Activated B cell treated with CpG ODN at 0.5 μM for 24 hours (primary cell): ENCODE measurements at regions of chr1 and their contacts with region 1.

Region 1: GRCh38 chr1:161045750-161046571 is at the start of gene USF1:
- DNase-seq: peak; percentile 91
- ATAC-seq: peak; percentile 62
- H3K4me3 Mint-ChIP-seq: peak within 1 kb of the TSS; percentile 95
- H3K27ac Mint-ChIP-seq: peak within 1 kb of the TSS; percentile 100
- H3K4me1 Mint-ChIP-seq: peaks cover 66% of the 10 kb centered on the region
- H3K27me3 Mint-ChIP-seq: no peaks in the 10 kb centered on the region
- CTCF ChIP-seq: no peak
- total RNA-seq, gene USF1: 134 and 143 TPM in 2 replicates

Region 2: DNA sequence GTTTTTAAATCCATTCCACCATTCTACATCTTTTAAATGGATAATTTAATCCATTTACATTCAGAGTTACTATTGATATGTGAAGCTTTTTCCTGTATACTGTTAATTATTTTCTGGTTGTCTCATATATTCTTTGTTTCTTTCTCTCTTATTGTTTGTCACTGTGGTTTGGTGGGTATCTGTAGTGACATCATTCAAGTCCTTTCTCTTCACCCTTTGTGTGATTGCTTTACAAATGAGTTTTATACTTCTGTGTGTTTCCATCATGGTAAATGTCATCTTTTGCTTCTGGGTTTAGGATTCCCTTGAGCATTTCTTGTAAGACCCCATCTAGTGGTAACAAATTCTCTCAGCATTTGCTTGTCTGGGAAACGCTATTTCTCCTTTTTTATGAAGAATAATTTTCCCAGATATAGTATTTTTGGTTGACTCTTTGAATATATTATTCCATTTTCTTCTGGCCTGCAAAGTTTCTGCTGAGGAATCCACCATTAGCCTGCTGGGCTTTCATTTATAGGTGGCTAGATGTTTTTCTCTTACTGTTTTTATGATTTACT is 239.8 kb before region 1 on chr1:
- CTCF ChIA-PET with region 1: no interaction called
- POLR2A ChIA-PET with region 1: no interaction called
- intact Hi-C with region 1: no loop called
- DNase-seq: no peak
- ATAC-seq: no peak
- H3K4me3 Mint-ChIP-seq: no peak overlapping the region
- H3K27ac Mint-ChIP-seq: no peak overlapping the region
- H3K4me1 Mint-ChIP-seq: peaks cover 66% of the 10 kb centered on the region
- H3K27me3 Mint-ChIP-seq: no peaks in the 10 kb centered on the region
- CTCF ChIP-seq: no peak

Region 3: GRCh38 chr1:160997323-160998038 is 48.5 kb before region 1 on chr1:
- CTCF ChIA-PET with region 1: interaction called, 10 read pairs
- POLR2A ChIA-PET with region 1: interaction called, 13 read pairs
- intact Hi-C with region 1: loop called (anchors 1 kb)
- DNase-seq: peak; percentile 29
- ATAC-seq: peak; percentile 81
- H3K4me3 Mint-ChIP-seq: no peak overlapping the region
- H3K27ac Mint-ChIP-seq: peak overlapping the region; percentile 42
- H3K4me1 Mint-ChIP-seq: peaks cover 3% of the 10 kb centered on the region
- H3K27me3 Mint-ChIP-seq: no peaks in the 10 kb centered on the region
- CTCF ChIP-seq: no peak

Region 4: GRCh38 chr1:161021165-161021960 is 24.6 kb before region 1 on chr1:
- CTCF ChIA-PET with region 1: interaction called, 3 read pairs
- POLR2A ChIA-PET with region 1: interaction called, 63 read pairs
- intact Hi-C with region 1: loop called (anchors 1 kb)
- DNase-seq: peak; percentile 74
- ATAC-seq: peak; percentile 92
- H3K4me3 Mint-ChIP-seq: peak overlapping the region; percentile 95
- H3K27ac Mint-ChIP-seq: peak overlapping the region; percentile 91
- H3K4me1 Mint-ChIP-seq: peaks cover 27% of the 10 kb centered on the region
- H3K27me3 Mint-ChIP-seq: no peaks in the 10 kb centered on the region
- CTCF ChIP-seq: no peak

Region 5: GRCh38 chr1:161117759-161118581 is 72.0 kb after region 1 on chr1 and contains the starts of genes NIT1 and PFDN2:
- CTCF ChIA-PET with region 1: no interaction called
- POLR2A ChIA-PET with region 1: interaction called, 25 read pairs
- intact Hi-C with region 1: loop called (anchors 2 kb)
- DNase-seq: peak; percentile 84
- ATAC-seq: peak; percentile 77
- H3K4me3 Mint-ChIP-seq: peak within 1 kb of the TSS; percentile 92
- H3K27ac Mint-ChIP-seq: peak within 1 kb of the TSS; percentile 89
- H3K4me1 Mint-ChIP-seq: peaks cover 87% of the 10 kb centered on the region
- H3K27me3 Mint-ChIP-seq: no peaks in the 10 kb centered on the region
- CTCF ChIP-seq: no peak
- total RNA-seq, gene NIT1: 40.5 and 43.9 TPM in 2 replicates
- total RNA-seq, gene PFDN2: 43.8 and 67.9 TPM in 2 replicates

Region 6: DNA sequence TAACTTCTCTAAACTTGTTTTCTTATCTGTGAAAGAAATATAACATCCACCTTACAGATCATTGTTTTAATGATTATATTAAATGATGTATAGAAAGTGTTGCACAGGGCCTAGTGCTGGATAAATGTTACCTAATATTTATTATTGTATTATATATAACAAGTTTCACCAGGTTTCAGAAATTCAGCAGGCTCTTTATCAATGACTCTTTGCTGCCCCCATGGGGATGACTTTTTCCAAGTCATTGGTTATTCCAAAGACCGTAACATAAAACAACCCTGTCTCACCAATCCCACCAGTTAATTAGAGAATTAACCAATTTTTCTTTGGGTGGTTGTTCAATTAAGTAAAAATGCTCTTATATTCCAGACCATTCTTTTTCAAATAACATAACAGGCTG is 93.8 kb after region 1 on chr1:
- CTCF ChIA-PET with region 1: interaction called, 9 read pairs
- POLR2A ChIA-PET with region 1: interaction called, 11 read pairs
- intact Hi-C with region 1: no loop called
- DNase-seq: no peak
- ATAC-seq: peak; percentile 50
- H3K4me3 Mint-ChIP-seq: no peak overlapping the region
- H3K27ac Mint-ChIP-seq: no peak overlapping the region
- H3K4me1 Mint-ChIP-seq: peaks cover 4% of the 10 kb centered on the region
- H3K27me3 Mint-ChIP-seq: no peaks in the 10 kb centered on the region
- CTCF ChIP-seq: no peak

Region 7: DNA sequence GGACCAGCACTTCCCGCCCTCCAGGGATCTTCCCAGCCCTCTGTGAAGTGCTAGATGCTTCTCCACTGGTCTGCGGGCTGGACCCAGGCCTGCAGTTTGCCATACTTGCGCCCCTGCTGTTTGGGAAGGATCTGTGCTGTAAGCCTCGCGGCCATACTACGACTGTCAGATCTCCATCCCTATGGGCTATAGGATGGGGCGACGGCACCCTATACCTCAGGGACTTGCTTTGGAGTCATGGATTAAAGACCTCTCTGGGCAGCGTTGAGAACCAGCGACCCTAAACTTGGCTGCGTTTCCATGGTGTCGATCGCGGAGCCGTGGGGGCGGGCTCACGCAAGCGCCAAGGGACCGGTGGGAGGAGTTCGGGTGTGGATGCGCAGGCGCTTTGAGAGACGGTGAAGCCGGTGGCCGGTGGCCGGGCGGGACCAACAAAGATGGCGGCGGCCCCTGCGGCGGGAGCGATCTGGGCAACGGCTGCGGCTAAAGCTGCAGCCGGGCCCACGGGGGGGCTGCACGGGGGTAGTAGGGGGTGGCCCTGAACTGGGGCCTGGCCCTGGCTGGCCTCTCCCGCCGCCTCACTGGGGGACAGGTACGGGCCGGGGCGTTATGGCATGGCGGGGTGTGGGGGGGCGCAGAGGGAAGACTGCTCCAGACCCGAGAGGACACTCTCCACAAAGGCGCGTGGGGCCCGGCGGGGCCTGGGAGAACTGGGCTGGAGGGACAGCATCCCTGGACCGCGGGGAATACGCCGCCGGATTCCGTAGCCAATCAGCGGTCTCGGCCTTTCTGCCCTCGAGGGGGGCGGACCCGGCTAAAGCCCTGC is 113.3 kb after region 1 on chr1 and contains the start of gene USP21:
- CTCF ChIA-PET with region 1: no interaction called
- POLR2A ChIA-PET with region 1: interaction called, 26 read pairs
- intact Hi-C with region 1: loop called (anchors 1 kb)
- DNase-seq: peak; percentile 93
- ATAC-seq: peak; percentile 95
- H3K4me3 Mint-ChIP-seq: peak within 1 kb of the TSS; percentile 93
- H3K27ac Mint-ChIP-seq: peak within 1 kb of the TSS; percentile 91
- H3K4me1 Mint-ChIP-seq: peaks cover 48% of the 10 kb centered on the region
- H3K27me3 Mint-ChIP-seq: no peaks in the 10 kb centered on the region
- CTCF ChIP-seq: no peak
- total RNA-seq, gene USP21: 31.9 and 38.1 TPM in 2 replicates

Region 8: GRCh38 chr1:161399257-161399998 is 353.5 kb after region 1 on chr1:
- CTCF ChIA-PET with region 1: no interaction called
- POLR2A ChIA-PET with region 1: no interaction called
- intact Hi-C with region 1: loop called (anchors 10 kb)
- DNase-seq: peak; percentile 93
- ATAC-seq: peak; percentile 81
- H3K4me3 Mint-ChIP-seq: peak overlapping the region; percentile 95
- H3K27ac Mint-ChIP-seq: peak overlapping the region; percentile 99
- H3K4me1 Mint-ChIP-seq: peaks cover 30% of the 10 kb centered on the region
- H3K27me3 Mint-ChIP-seq: no peaks in the 10 kb centered on the region
- CTCF ChIP-seq: no peak